Activated T-helper 1 cell treated with anti-CD3 and anti-CD28 coated beads, Interleukin-12 subunit alpha, Interleukin-12 subunit beta, Interleukin-2, Interleukin-4 antibody, amounts not matched to agents 30 ng/mL and 10 ng/mL and 1 ng/mL, durations not matched to agents 14 hours and 24 hours and 36 hours (primary cell): ENCODE measurements at regions of chr7 and their contacts with region 1.

Region 1: GRCh38 chr7:130069978-130070860 is at the start of gene KLHDC10:
- DNase-seq: peak; percentile 93
- H3K4me3 Mint-ChIP-seq: peak within 1 kb of the TSS; percentile 93
- H3K27ac Mint-ChIP-seq: peak within 1 kb of the TSS; percentile 91
- H3K4me1 Mint-ChIP-seq: peaks cover 39% of the 10 kb centered on the region
- H3K27me3 Mint-ChIP-seq: no peaks in the 10 kb centered on the region
- total RNA-seq, gene KLHDC10: 13.2 and 15.6 TPM in 2 replicates

Region 2: DNA sequence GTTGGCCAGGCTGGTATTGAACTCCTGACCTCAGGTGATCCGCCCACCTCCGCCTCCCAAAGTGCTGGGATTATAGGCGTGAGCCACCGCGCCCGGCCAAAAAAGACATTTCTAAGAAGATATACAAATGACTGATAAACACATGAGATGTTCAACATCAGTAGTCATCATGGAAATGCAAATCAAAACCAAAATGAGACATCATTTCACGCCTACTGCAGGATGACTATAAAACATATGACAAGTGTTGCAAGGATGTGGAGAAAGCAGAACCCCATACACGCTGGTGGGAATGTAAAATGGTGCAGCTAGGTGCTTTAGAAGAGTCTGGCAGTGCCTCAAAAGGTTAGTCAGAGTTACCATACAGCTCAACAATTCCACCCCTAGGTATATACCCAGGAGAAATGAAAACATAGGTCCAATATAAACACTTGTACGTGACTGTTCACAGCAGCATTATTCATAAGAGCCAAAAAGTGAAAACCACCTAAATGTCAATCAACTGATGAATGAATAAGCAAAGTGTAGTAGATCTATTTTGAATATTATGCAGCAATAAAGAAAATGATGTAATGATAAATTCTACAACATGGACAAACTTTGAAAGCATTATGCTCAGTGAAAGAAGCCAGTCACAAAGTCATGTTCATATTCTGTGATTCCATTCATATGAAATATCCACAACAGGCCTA is 110.5 kb after region 1 on chr7:
- intact Hi-C with region 1: loop called (anchors 1 kb)
- DNase-seq: no peak
- H3K4me3 Mint-ChIP-seq: peak overlapping the region; percentile 15
- H3K27ac Mint-ChIP-seq: peak overlapping the region; percentile 92
- H3K4me1 Mint-ChIP-seq: peaks cover 36% of the 10 kb centered on the region
- H3K27me3 Mint-ChIP-seq: no peaks in the 10 kb centered on the region

Region 3: DNA sequence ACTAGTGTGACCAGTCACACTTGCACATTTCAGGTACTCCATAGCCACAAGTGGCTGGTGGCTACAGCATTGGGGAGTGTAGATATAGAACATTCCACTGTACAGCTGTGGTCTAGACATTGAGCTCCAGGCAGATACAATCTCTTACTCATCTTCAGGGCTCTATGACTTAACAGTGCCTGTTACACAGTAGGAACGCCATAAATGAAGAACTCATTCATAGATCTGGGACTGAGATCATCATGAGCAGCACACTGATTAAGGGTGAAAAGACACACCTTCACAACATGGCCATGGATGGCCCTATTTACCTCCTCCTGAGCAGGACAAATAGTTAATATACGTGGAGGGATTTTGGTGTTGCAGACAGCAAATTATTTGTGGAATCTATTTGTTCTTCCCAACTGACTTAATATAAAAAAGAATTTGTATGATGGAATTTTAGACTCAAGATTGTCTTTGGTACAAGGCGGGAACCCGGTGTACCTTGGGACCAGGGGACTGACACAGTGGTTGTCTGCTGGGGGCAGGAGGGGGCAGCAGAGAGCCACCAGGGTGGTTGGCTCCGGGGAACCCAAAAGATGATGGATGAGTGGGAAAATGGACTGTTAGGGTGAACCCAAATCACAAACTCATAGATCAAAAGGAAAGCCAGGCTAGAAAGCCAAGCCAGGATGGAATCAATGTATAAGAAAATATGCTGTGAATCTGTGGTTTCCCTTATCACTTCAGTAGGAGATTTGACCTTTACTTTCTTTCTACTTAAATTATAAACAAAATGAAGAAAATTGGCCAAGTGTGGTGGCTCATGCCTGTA is 172.2 kb after region 1 on chr7:
- intact Hi-C with region 1: loop called (anchors 1 kb)
- DNase-seq: peak; percentile 6
- H3K4me3 Mint-ChIP-seq: no peak overlapping the region
- H3K27ac Mint-ChIP-seq: no peak overlapping the region
- H3K4me1 Mint-ChIP-seq: peaks cover 11% of the 10 kb centered on the region
- H3K27me3 Mint-ChIP-seq: peaks cover 8% of the 10 kb centered on the region

Region 4: GRCh38 chr7:130440527-130441365 is 370.5 kb after region 1 on chr7 and contains the start of gene CEP41:
- intact Hi-C with region 1: loop called (anchors 5 kb)
- DNase-seq: peak; percentile 90
- H3K4me3 Mint-ChIP-seq: peak within 1 kb of the TSS; percentile 97
- H3K27ac Mint-ChIP-seq: peak within 1 kb of the TSS; percentile 95
- H3K4me1 Mint-ChIP-seq: peaks cover 44% of the 10 kb centered on the region
- H3K27me3 Mint-ChIP-seq: no peaks in the 10 kb centered on the region
- total RNA-seq, gene CEP41: 17.1 and 17.8 TPM in 2 replicates

Region 5: DNA sequence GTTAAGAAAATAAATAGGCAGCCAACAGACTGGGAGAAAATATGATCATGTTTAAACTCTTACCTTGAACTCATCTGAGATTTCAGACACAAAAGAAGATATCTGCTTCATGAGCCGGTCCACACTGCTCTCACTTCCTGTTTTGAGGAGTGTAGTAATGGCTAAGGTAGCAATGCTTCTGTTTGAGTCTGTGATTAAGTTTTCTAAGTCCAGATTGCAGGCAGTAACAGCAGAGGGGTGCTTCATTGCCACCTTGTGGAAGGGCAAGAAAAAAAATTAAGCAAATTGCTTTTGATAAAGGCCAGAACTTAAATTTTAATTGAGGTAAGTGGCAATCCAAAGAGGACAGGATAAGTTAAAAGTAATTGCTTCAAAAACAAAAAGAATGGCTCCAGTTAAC is 490.8 kb after region 1 on chr7:
- intact Hi-C with region 1: loop called (anchors 1 kb)
- DNase-seq: no peak
- H3K4me3 Mint-ChIP-seq: no peak overlapping the region
- H3K27ac Mint-ChIP-seq: no peak overlapping the region
- H3K4me1 Mint-ChIP-seq: no peaks in the 10 kb centered on the region
- H3K27me3 Mint-ChIP-seq: no peaks in the 10 kb centered on the region

Region 6: DNA sequence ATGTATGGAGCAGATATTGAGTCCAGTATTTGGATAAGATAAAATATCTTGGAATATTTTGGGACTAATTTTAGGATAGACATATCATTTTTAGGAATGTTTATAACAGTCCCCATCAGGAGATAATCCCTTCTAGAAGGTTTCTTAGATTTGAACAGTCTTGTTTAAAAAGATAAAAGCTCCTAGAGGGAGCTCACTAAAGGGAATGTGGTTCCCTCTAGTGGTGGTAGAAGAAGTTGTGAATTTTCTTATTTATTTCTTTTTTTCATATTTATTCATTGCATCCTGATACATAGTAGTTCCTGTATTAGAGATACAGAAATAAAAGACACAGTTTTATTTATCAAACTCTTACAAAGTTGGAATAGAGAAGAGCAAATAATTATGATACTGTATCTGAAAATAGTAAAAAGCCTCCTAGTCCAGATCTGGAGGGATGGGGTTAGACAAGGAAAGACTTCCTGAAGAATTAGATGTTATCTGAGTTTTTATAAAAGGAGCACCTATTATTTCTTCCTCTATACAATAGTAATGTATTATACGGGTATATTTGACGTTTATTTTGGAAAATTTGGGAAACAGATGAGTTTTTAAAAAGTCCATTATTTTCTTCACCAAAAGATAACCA is 688.3 kb after region 1 on chr7:
- intact Hi-C with region 1: loop called (anchors 1 kb)
- DNase-seq: no peak
- H3K4me3 Mint-ChIP-seq: no peak overlapping the region
- H3K27ac Mint-ChIP-seq: no peak overlapping the region
- H3K4me1 Mint-ChIP-seq: no peaks in the 10 kb centered on the region
- H3K27me3 Mint-ChIP-seq: peaks cover 13% of the 10 kb centered on the region